OCI-LY7 (cell line): ENCODE measurements at regions of chr5 and their contacts with region 1.

Region 1: GRCh38 chr5:139633295-139634027 is 14.7 kb upstream of the CXXC5 start:
- DNase-seq: peak; percentile 82
- H3K4me3 ChIP-seq: peak overlapping the region; percentile 34
- H3K27ac ChIP-seq: peak overlapping the region; percentile 98
- H3K4me1 ChIP-seq: peaks cover 63% of the 10 kb centered on the region
- CTCF ChIP-seq: peak; percentile 99

Region 2: GRCh38 chr5:139560752-139561654 is 72.5 kb before region 1 on chr5 and contains the start of gene UBE2D2:
- CTCF ChIA-PET with region 1: interaction called, 5 read pairs
- POLR2A ChIA-PET with region 1: interaction called, 13 read pairs
- intact Hi-C with region 1: loop called (anchors 2 kb)
- DNase-seq: peak; percentile 99
- H3K4me3 ChIP-seq: peak within 1 kb of the TSS; percentile 82
- H3K27ac ChIP-seq: peak within 1 kb of the TSS; percentile 92
- H3K4me1 ChIP-seq: peaks cover 34% of the 10 kb centered on the region
- CTCF ChIP-seq: no peak
- total RNA-seq, gene UBE2D2: 102 and 145 TPM in 2 replicates

Region 3: DNA sequence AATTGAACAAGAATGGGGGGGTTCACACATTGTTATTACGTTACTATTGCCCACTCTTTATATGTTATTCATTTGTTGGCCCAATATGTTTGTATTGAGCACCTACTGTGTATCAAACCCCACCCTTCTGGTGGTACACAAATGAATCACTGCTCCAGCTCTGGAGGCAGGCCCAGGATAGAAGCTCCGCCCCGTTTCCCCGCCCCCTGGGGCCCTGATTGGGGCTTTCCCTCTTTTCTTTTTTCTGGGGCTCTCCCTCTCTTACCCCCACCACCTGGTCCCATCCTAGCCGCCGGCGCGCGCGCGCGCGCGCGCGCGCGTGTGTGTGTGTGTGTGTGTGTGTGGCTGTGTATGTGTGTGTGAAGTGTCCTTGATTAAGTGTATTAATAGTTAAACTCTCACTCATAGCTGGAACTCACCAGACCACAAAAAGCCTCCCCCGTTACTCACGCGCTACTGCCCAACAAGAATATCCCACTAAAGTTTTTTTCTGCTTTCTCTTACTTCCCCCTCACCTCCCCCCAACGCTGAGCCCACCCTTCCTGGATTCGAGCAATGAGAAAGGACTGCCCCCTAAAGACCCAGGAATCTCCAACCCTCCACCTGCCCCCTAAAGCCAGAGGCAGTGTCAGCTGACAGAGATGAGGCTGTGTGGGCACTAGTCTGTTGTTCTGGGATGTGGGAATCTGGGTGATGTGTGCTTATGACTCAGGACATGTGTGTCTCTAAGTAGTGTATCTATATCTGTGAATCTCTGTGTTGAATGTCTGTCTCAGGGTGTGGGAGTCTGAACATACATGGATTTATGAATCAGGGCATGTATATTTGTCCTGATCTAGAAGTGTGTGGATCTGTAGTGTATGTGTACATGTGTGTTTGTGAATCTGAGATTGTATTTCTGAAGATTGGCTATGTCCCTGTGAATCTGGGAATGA is 18.7 kb after region 1 on chr5:
- CTCF ChIA-PET with region 1: interaction called, 20 read pairs
- POLR2A ChIA-PET with region 1: interaction called, 12 read pairs
- intact Hi-C with region 1: loop called (anchors 1 kb)
- DNase-seq: peak; percentile 87
- H3K4me3 ChIP-seq: peak overlapping the region; percentile 94
- H3K27ac ChIP-seq: peak overlapping the region; percentile 89
- H3K4me1 ChIP-seq: peaks cover 72% of the 10 kb centered on the region
- CTCF ChIP-seq: no peak

Region 4: GRCh38 chr5:139690064-139690802 is 56.8 kb after region 1 on chr5:
- CTCF ChIA-PET with region 1: interaction called, 49 read pairs
- POLR2A ChIA-PET with region 1: interaction called, 9 read pairs
- intact Hi-C with region 1: loop called (anchors 1 kb)
- DNase-seq: peak; percentile 69
- H3K4me3 ChIP-seq: peak overlapping the region; percentile 28
- H3K27ac ChIP-seq: peak overlapping the region; percentile 90
- H3K4me1 ChIP-seq: peaks cover 55% of the 10 kb centered on the region
- CTCF ChIP-seq: peak; percentile 89

Region 5: DNA sequence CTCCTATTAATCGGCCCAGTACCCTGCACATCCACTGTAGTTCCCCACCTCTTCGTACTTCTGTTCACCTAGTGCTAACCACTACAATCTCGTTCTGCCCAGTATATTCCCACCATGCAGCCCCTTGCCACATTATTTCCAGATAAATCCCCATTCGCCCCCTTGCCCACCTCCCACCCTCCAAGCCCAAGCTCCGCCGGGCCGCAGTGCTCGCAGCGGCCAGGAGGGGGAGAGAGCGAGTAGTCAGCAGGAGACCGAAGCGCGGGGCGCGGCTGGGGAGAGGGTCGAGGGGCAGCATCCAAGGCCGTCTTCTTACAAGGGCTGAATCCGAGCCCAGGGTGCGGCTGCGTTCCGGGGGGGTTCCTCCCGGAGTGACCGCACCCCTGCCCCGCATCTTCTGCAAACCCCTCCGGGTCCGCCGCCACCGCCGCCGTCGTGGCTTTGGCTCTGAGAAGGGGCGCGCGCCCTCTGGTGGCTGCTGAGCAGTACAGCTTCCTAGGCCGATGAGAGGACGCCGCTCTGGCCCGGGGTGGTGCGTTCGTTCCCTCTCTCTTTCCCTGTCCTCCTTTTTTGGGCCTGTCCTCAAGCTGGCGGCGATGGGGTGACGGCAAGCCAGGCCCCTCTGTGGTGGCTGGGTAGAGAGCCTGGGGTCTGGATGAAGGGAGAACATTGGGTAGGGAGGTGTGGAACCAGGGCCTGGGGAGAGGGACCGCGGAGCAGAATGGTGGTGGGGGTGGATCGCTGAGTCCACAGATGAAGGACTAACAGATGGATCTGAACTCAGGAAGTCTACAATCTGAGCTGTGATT is 132.2 kb after region 1 on chr5:
- CTCF ChIA-PET with region 1: interaction called, 4 read pairs
- POLR2A ChIA-PET with region 1: interaction called, 3 read pairs
- intact Hi-C with region 1: loop called (anchors 1 kb)
- DNase-seq: peak; percentile 84
- H3K4me3 ChIP-seq: peak overlapping the region; percentile 69
- H3K27ac ChIP-seq: no peak overlapping the region
- H3K4me1 ChIP-seq: peaks cover 20% of the 10 kb centered on the region
- CTCF ChIP-seq: peak; percentile 97